ENCODE measurements at regions of chr16 and their contacts with region 1.

Region 1: GRCh38 chr16:1929578-1930337 is 11.5 kb upstream of the HS3ST6 start:
- DNase-seq: peak; percentile 90
- H3K4me3 ChIP-seq: peak overlapping the region; percentile 56
- H3K27ac ChIP-seq: no peak overlapping the region
- H3K4me1 ChIP-seq: peaks cover 6% of the 10 kb centered on the region
- CTCF ChIP-seq: peak; percentile 87

Region 2: GRCh38 chr16:1734123-1734832 is 195.5 kb before region 1 on chr16:
- CTCF ChIA-PET with region 1: no interaction called
- POLR2A ChIA-PET with region 1: no interaction called
- intact Hi-C with region 1: no loop called
- DNase-seq: no peak
- H3K4me3 ChIP-seq: no peak overlapping the region
- H3K27ac ChIP-seq: no peak overlapping the region
- H3K4me1 ChIP-seq: no peaks in the 10 kb centered on the region
- CTCF ChIP-seq: no peak

Region 3: GRCh38 chr16:1863681-1864460 is 65.9 kb before region 1 on chr16:
- CTCF ChIA-PET with region 1: interaction called, 3 read pairs
- POLR2A ChIA-PET with region 1: interaction called, 3 read pairs
- intact Hi-C with region 1: loop called (anchors 1 kb)
- DNase-seq: peak; percentile 55
- H3K4me3 ChIP-seq: no peak overlapping the region
- H3K27ac ChIP-seq: no peak overlapping the region
- H3K4me1 ChIP-seq: no peaks in the 10 kb centered on the region
- CTCF ChIP-seq: peak; percentile 74

Region 4: GRCh38 chr16:1944612-1945199 is 14.9 kb after region 1 on chr16:
- CTCF ChIA-PET with region 1: no interaction called
- POLR2A ChIA-PET with region 1: no interaction called
- intact Hi-C with region 1: no loop called
- DNase-seq: no peak
- H3K4me3 ChIP-seq: no peak overlapping the region
- H3K27ac ChIP-seq: no peak overlapping the region
- H3K4me1 ChIP-seq: peaks cover 18% of the 10 kb centered on the region
- CTCF ChIP-seq: no peak